ENCODE measurements at regions of chr14 and their contacts with region 1.

Region 1: GRCh38 chr14:34539407-34540180 is at the start of gene EAPP:
- DNase-seq: peak; percentile 91 to 97 (median 93)
- H3K4me3 ChIP-seq: peak within 1 kb of the TSS; percentile 66 to 94
- H3K4me3 Mint-ChIP-seq: peak within 1 kb of the TSS; percentile 97 to 100 (median 99)
- H3K27ac ChIP-seq: peak within 1 kb of the TSS; percentile 100
- H3K27ac Mint-ChIP-seq: peak within 1 kb of the TSS; percentile 97 to 100 (median 99)
- H3K4me1 ChIP-seq: peaks cover 31% of the 10 kb centered on the region
- H3K4me1 Mint-ChIP-seq: peaks cover 19 to 45% (median 31%) of the 10 kb centered on the region in 4 donors
- H3K27me3 ChIP-seq: no peaks in the 10 kb centered on the region
- H3K27me3 Mint-ChIP-seq: no peaks in the 10 kb centered on the region
- total RNA-seq, gene EAPP: 58.2 to 66.4 TPM

Region 2: GRCh38 chr14:34368115-34368970 is 171.3 kb before region 1 on chr14:
- CTCF ChIA-PET with region 1: no interaction called
- POLR2A ChIA-PET with region 1: no interaction called
- intact Hi-C with region 1: no loop called
- DNase-seq: no peak
- H3K4me3 ChIP-seq: no peak overlapping the region
- H3K4me3 Mint-ChIP-seq: no peak overlapping the region
- H3K27ac ChIP-seq: no peak overlapping the region
- H3K27ac Mint-ChIP-seq: no peak overlapping the region
- H3K4me1 ChIP-seq: no peaks in the 10 kb centered on the region
- H3K4me1 Mint-ChIP-seq: no peaks in the 10 kb centered on the region
- H3K27me3 ChIP-seq: no peaks in the 10 kb centered on the region
- H3K27me3 Mint-ChIP-seq: peaks cover 9 to 26% of the 10 kb centered on the region in 2 donors

Region 3: GRCh38 chr14:34461334-34462131 is 78.1 kb before region 1 on chr14:
- CTCF ChIA-PET with region 1: no interaction called
- POLR2A ChIA-PET with region 1: no interaction called
- intact Hi-C with region 1: loop called (anchors 5 kb)
- DNase-seq: peak in 4 of 5 donors; percentile 8 to 44 (median 14)
- H3K4me3 ChIP-seq: peak overlapping the region; percentile 43 to 51
- H3K4me3 Mint-ChIP-seq: peak overlapping the region; percentile 90 to 95 (median 94)
- H3K27ac ChIP-seq: peak overlapping the region; percentile 59
- H3K27ac Mint-ChIP-seq: peak overlapping the region; percentile 73 to 98 (median 94)
- H3K4me1 ChIP-seq: peaks cover 20% of the 10 kb centered on the region
- H3K4me1 Mint-ChIP-seq: peaks cover 11 to 20% (median 16%) of the 10 kb centered on the region in 4 donors
- H3K27me3 ChIP-seq: no peaks in the 10 kb centered on the region
- H3K27me3 Mint-ChIP-seq: no peaks in the 10 kb centered on the region

Region 4: GRCh38 chr14:34489353-34489752 is 50.2 kb before region 1 on chr14:
- CTCF ChIA-PET with region 1: no interaction called
- POLR2A ChIA-PET with region 1: no interaction called
- intact Hi-C with region 1: no loop called
- DNase-seq: no peak
- H3K4me3 ChIP-seq: no peak overlapping the region
- H3K4me3 Mint-ChIP-seq: no peak overlapping the region
- H3K27ac ChIP-seq: no peak overlapping the region
- H3K27ac Mint-ChIP-seq: no peak overlapping the region
- H3K4me1 ChIP-seq: no peaks in the 10 kb centered on the region
- H3K4me1 Mint-ChIP-seq: no peaks in the 10 kb centered on the region
- H3K27me3 ChIP-seq: no peaks in the 10 kb centered on the region
- H3K27me3 Mint-ChIP-seq: no peaks in the 10 kb centered on the region

Region 5: GRCh38 chr14:34554540-34555333 is 15.1 kb after region 1 on chr14:
- CTCF ChIA-PET with region 1: no interaction called
- POLR2A ChIA-PET with region 1: interaction called, 13 read pairs
- intact Hi-C with region 1: no loop called
- DNase-seq: peak in 2 of 5 donors; percentile 31 to 51
- H3K4me3 ChIP-seq: no peak overlapping the region
- H3K4me3 Mint-ChIP-seq: peak overlapping the region; percentile 49 to 82 (median 67)
- H3K27ac ChIP-seq: peak overlapping the region; percentile 34
- H3K27ac Mint-ChIP-seq: peak overlapping the region; percentile 27 to 92 (median 80)
- H3K4me1 ChIP-seq: peaks cover 6% of the 10 kb centered on the region
- H3K4me1 Mint-ChIP-seq: peaks cover 11 to 18% (median 16%) of the 10 kb centered on the region in 4 donors
- H3K27me3 ChIP-seq: no peaks in the 10 kb centered on the region
- H3K27me3 Mint-ChIP-seq: no peaks in the 10 kb centered on the region

Region 6: DNA sequence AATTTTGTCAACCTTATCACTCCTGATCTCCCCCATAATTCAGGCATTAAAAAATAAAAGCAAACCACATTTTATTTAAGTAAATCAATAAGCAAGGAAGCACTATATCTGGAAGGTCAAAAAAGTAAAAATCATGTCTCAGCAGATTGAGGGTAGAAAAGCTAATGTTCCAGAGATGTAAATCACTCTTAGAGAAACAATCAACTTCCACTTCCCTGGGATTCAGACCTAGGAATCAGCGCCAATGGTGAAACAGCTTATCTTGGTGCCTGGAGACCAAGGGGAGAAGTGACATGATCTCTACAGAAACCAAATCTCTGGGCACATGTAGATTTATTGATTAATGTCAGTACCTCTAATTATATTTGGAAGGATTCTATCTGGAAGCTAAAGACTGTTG is 101.2 kb after region 1 on chr14:
- CTCF ChIA-PET with region 1: no interaction called
- POLR2A ChIA-PET with region 1: no interaction called
- intact Hi-C with region 1: no loop called
- DNase-seq: no peak
- H3K4me3 ChIP-seq: no peak overlapping the region
- H3K4me3 Mint-ChIP-seq: no peak overlapping the region
- H3K27ac ChIP-seq: no peak overlapping the region
- H3K27ac Mint-ChIP-seq: no peak overlapping the region
- H3K4me1 ChIP-seq: no peaks in the 10 kb centered on the region
- H3K4me1 Mint-ChIP-seq: no peaks in the 10 kb centered on the region
- H3K27me3 ChIP-seq: no peaks in the 10 kb centered on the region
- H3K27me3 Mint-ChIP-seq: no peaks in the 10 kb centered on the region

Measured in CD4-positive, alpha-beta memory T cell (primary cell).